A549 (cell line): ENCODE measurements at regions of chr14 and their contacts with region 1.

Region 1: GRCh38 chr14:66974397-66975025 is 214.7 kb upstream of the GARIN2 start:
- DNase-seq: peak in 1 of 2 experiments; percentile 4
- ATAC-seq: no peak
- H3K4me3 ChIP-seq: no peak overlapping the region
- H3K27ac ChIP-seq: no peak overlapping the region
- H3K4me1 ChIP-seq: peaks cover 4% of the 10 kb centered on the region; the same call in 1 of the 3 replicates
- CTCF ChIP-seq: no peak
- EP300 ChIP-seq: no peak
- POLR2A ChIP-seq: no peak
- RAD21 ChIP-seq: no peak

Region 2: GRCh38 chr14:67077921-67078320 is 103.4 kb after region 1 on chr14:
- CTCF ChIA-PET with region 1: no interaction called
- POLR2A ChIA-PET with region 1: interaction called, 10 read pairs
- DNase-seq: no peak
- ATAC-seq: no peak
- H3K4me3 ChIP-seq: no peak overlapping the region
- H3K27ac ChIP-seq: no peak overlapping the region
- H3K4me1 ChIP-seq: no peaks in the 10 kb centered on the region
- CTCF ChIP-seq: no peak
- EP300 ChIP-seq: no peak
- POLR2A ChIP-seq: no peak
- RAD21 ChIP-seq: no peak